PC-3 (cell line): ENCODE measurements at regions of chr1 and their contacts with region 1.

Region 1: GRCh38 chr1:51463561-51463960 is 55.5 kb downstream of the EPS15 start:
- DNase-seq: no peak
- ATAC-seq: no peak
- H3K4me3 ChIP-seq: no peak overlapping the region
- H3K27ac ChIP-seq: no peak overlapping the region
- H3K4me1 ChIP-seq: no peaks in the 10 kb centered on the region
- H3K27me3 ChIP-seq: no peaks in the 10 kb centered on the region
- CTCF ChIP-seq: no peak

Region 2: DNA sequence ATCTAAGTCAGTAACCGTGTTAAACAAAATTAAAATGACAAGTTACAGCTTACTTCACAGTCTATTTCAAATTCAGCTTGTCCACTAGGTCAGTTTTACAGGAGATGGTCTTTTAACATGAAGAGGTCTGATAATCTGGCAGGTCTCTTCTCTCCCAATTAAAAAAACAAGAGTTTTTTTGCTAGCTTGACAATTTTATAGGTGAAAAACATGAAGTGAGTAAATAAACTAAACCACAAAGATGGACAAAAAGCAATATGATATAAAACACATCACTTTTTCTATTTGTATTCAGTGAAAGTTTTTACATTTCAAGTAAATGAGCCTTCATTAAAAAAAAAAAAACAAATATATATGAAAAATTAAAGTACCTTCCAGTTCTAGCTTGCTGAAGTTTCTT is 108.2 kb before region 1 on chr1:
- CTCF ChIA-PET with region 1: interaction called, 12 read pairs
- POLR2A ChIA-PET with region 1: no interaction called
- intact Hi-C with region 1: no loop called
- DNase-seq: no peak
- ATAC-seq: no peak
- H3K4me3 ChIP-seq: no peak overlapping the region
- H3K27ac ChIP-seq: no peak overlapping the region
- H3K4me1 ChIP-seq: no peaks in the 10 kb centered on the region
- H3K27me3 ChIP-seq: no peaks in the 10 kb centered on the region
- CTCF ChIP-seq: no peak

Region 3: DNA sequence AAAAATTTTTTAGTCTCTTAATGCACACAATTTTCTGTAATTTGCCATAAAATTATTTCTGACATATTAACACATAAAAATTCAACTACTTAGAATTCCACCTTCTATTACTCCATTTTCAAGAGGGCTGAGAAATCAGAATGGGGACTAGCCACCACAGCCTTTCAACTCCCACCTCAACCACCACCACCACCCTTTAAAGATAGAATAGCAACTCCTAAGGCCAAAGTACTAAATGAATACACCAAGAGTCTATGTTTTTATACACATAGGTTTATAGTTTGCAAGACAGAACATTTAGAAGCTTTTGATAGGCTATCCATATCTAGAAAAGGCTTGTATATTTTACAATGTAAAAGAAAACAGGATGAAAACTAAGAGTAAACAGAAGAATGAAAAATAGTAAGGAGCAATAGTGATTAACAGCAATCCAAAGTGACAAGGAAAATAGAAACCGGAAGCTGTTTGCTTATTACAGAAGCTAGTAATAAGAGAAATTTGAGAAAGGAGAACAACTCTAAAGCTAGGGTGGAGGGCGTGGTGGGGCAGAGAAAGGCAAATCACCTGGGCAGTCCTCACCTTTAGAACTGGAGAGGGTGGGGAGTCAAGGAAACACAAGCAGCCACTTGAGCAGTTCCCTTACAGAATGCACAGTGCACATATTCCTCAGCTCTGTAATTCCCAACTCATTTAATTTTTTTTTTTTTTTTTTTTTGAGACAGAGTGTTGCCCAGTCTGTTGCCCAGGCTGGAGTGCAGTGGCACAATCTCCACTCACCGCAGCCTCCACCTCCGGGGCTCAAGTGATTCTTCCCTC is 27.8 kb after region 1 on chr1:
- CTCF ChIA-PET with region 1: no interaction called
- POLR2A ChIA-PET with region 1: no interaction called
- intact Hi-C with region 1: no loop called
- DNase-seq: no peak
- ATAC-seq: peak; percentile 48
- H3K4me3 ChIP-seq: no peak overlapping the region
- H3K27ac ChIP-seq: no peak overlapping the region
- H3K4me1 ChIP-seq: peaks cover 13% of the 10 kb centered on the region; the same call in 1 of the 2 replicates
- H3K27me3 ChIP-seq: no peaks in the 10 kb centered on the region
- CTCF ChIP-seq: no peak